MCF 10A (cell line): ENCODE measurements at regions of chr12 and their contacts with region 1.

Region 1: GRCh38 chr12:46131729-46132469 is 136.9 kb downstream of the SLC38A1 start:
- DNase-seq: no peak
- H3K4me3 Mint-ChIP-seq: no peak overlapping the region
- H3K27ac Mint-ChIP-seq: no peak overlapping the region
- H3K4me1 Mint-ChIP-seq: no peaks in the 10 kb centered on the region
- H3K27me3 Mint-ChIP-seq: no peaks in the 10 kb centered on the region
- CTCF ChIP-seq: no peak

Region 2: GRCh38 chr12:46187023-46187422 is 55.1 kb after region 1 on chr12:
- CTCF ChIA-PET with region 1: no interaction called
- POLR2A ChIA-PET with region 1: no interaction called
- intact Hi-C with region 1: no loop called
- DNase-seq: peak; percentile 79
- H3K4me3 Mint-ChIP-seq: no peak overlapping the region
- H3K27ac Mint-ChIP-seq: peak overlapping the region; percentile 30
- H3K4me1 Mint-ChIP-seq: peaks cover 16% of the 10 kb centered on the region
- H3K27me3 Mint-ChIP-seq: no peaks in the 10 kb centered on the region
- CTCF ChIP-seq: no peak

Region 3: DNA sequence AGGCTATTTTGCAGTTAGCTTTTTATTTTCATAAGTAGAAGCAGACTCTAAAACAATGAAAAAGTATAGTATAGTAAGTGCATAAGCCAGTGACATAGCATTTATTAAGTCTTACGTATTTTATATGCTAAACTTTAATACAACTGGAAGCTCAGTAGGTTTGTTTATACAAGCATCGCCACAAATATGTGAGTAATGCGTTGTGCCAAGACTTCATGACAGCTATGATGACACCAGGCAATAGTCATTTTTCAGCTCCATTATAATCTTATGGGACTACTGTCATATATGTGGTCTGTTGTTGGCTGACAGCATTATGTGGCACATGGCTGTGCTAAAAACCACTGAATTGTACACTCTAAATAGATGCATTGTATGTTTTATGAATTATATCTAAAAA is 200.4 kb after region 1 on chr12:
- CTCF ChIA-PET with region 1: no interaction called
- POLR2A ChIA-PET with region 1: no interaction called
- intact Hi-C with region 1: loop called (anchors 10 kb)
- DNase-seq: peak; percentile 57
- H3K4me3 Mint-ChIP-seq: no peak overlapping the region
- H3K27ac Mint-ChIP-seq: no peak overlapping the region
- H3K4me1 Mint-ChIP-seq: no peaks in the 10 kb centered on the region
- H3K27me3 Mint-ChIP-seq: no peaks in the 10 kb centered on the region
- CTCF ChIP-seq: no peak